Gastrocnemius medialis (tissue), 4 donors: ENCODE measurements at regions of chr2 and their contacts with region 1.

Region 1: DNA sequence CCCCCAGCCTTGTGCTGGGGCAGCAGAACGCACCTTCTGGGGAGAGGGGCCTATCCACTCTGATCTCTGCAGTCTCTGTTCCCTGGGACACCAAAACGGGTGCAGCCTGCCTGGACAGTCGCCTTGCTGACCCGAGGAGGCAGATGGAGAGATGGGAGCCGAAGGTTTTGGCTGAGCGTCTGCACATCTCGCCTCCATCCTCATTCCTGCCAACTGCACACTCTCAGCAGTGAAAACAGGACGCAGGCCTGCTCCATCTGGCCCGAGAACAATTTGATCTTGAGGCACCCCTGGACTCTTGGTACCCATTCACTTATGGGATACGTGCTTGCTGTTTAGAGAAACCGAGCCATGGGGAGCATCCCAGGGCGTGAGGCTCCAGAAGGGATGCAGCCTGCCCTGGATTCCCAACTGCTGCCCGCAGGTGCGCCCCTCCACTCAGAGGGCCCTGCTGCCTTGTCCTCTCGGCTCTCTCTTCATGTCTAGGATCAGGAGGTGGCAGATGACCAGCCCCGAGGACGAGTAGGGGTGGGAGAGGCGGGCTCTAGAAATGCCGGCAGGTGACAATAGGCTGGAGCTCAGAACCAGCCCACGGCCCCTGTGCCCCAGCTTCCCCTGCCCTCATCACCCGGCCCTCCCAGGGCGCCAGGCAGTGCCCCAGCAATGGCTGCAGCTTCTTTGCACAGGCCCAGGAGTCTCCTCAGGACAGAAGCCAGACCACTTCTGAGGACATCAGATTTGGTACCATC is 9.1 kb upstream of the SEMA4C start:
- DNase-seq: no peak
- ATAC-seq: no peak
- H3K4me3 ChIP-seq: no peak overlapping the region
- H3K27ac ChIP-seq: no peak overlapping the region
- H3K4me1 ChIP-seq: peaks cover 9 to 11% of the 10 kb centered on the region in 2 donors
- H3K27me3 ChIP-seq: no peaks in the 10 kb centered on the region
- CTCF ChIP-seq: no peak
- POLR2A ChIP-seq: no peak

Region 2: DNA sequence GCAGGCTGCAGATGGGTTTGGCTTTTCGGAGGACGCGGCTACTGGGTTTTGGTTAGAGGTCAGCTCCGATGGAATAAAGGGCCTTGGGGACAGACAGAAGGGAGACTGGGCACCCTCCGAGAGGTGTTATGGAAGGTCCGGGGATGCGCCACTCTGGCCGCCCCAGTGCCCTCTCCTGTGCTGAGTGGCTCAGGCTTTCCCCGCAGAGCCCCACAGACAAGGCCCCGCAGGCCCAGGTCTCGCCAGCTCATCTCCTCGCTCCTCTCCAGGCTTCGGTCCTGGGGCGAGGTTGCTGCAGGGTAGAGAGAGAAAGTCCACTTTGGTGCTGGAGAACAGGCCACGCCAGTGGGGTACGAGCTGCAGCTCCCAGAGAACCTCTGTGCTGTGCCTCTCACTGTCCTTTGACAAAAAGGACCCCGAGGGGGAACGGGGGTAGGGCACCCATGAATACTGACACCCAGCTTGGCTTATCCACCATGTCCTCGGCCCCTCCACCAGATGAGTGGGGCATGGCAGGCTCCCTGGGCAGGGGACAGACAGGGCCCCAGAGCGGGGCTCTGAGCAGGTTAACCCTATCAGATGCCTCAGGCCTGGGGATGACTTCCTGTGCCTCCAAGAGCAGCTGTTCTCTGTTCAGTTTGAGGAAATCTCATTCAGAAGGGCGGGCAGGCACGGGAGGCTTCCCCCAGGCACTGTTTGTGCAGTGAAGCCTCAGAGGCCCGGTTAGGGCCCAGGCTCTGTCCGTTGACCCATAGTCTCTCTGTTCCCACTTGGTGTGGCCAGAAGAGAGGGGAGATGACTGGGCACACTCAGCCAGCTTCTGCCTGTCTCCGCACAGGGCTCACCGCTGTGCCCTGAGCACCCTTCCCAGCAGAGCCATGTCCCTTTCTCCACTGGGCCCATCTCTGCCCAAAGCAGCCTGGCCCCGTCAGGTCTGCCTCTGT is 78.6 kb before region 1 on chr2:
- in situ Hi-C with region 1: no loop called
- intact Hi-C with region 1: no loop called
- DNase-seq: no peak
- ATAC-seq: no peak
- H3K4me3 ChIP-seq: no peak overlapping the region
- H3K27ac ChIP-seq: peak overlapping the region; percentile 84 to 90 (median 88)
- H3K4me1 ChIP-seq: peaks cover 6 to 8% of the 10 kb centered on the region in 2 donors
- H3K27me3 ChIP-seq: no peaks in the 10 kb centered on the region
- CTCF ChIP-seq: no peak
- POLR2A ChIP-seq: no peak

Region 3: GRCh38 chr2:96895726-96896651 is 17.0 kb after region 1 on chr2:
- in situ Hi-C with region 1: no loop called
- intact Hi-C with region 1: loop called (anchors 1 kb)
- DNase-seq: peak in 1 of 2 donors; percentile 53
- ATAC-seq: peak; percentile 67 to 68
- H3K4me3 ChIP-seq: no peak overlapping the region
- H3K27ac ChIP-seq: peak overlapping the region in 3 of 4 donors; percentile 33 to 61 (median 56)
- H3K4me1 ChIP-seq: peaks cover 40 to 49% of the 10 kb centered on the region in 2 donors
- H3K27me3 ChIP-seq: no peaks in the 10 kb centered on the region
- CTCF ChIP-seq: no peak
- POLR2A ChIP-seq: no peak